ENCODE measurements at regions of chr12 and their contacts with region 1.

Region 1: GRCh38 chr12:101830367-101831325 is at the start of gene GNPTAB:
- DNase-seq: peak; percentile 95
- ATAC-seq: peak; percentile 97
- total RNA-seq, gene GNPTAB: 47.8 TPM

Region 2: DNA sequence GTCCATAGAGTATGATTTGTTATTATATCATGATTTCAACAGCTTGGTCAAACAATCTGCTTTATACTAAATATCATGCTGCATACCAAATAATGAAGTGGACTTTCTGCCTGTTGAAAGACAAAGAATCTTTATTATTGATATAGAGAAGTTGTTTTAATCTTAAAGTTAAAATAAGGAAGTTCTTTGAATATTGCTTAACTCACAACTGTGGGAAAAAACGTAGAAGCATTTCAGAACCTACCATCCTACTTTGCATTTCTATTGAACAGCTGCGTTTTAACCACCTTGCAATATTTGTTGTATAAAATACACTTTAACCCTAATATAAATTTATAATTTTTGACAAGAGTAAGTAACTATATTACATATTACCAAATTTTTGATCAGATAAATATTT is 400.2 kb before region 1 on chr12:
- intact Hi-C with region 1: no loop called
- DNase-seq: no peak
- ATAC-seq: no peak

Region 3: GRCh38 chr12:101773650-101774162 is 56.9 kb before region 1 on chr12:
- intact Hi-C with region 1: loop called (anchors 5 kb)
- DNase-seq: peak; percentile 54
- ATAC-seq: peak; percentile 73

Region 4: GRCh38 chr12:101782273-101782731 is 48.3 kb before region 1 on chr12:
- intact Hi-C with region 1: loop called (anchors 5 kb)
- DNase-seq: no peak
- ATAC-seq: no peak

Region 5: DNA sequence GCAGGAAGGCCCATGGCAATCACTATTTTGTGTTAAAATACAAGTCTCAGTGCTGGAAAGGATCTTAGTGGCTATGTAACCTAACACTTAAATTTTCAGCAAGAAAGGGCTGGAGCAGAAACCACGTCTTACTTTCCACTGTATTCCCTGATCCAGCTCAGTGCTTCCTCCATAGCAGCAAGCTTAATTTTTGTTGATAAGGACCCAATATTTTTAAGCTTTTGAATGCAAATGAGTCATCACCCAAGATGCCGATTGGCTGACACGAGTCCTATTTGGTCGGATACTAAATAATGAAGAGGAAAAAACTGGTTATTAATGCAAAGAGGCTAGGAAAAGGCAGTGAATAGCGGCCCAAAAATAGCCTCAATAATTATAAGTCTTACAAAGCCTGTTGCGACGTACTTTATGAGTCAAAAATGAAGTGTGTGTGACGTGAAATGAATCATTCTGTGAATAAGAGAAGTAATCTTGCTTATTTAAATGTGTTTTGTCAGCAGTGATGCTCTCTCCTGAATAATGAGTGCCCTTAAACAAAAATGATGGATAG is 696.6 kb after region 1 on chr12:
- intact Hi-C with region 1: no loop called
- DNase-seq: no peak
- ATAC-seq: no peak